Endothelial cell of umbilical vein (primary cell): ENCODE measurements at regions of chr3 and their contacts with region 1.

Region 1: GRCh38 chr3:158644345-158644908 is at the start of gene GFM1:
- DNase-seq: peak; percentile 97
- H3K4me3 ChIP-seq: peak within 1 kb of the TSS; percentile 41 to 95 (median 74)
- H3K27ac ChIP-seq: peak within 1 kb of the TSS; percentile 60
- H3K4me1 ChIP-seq: peaks cover 17% of the 10 kb centered on the region
- H3K27me3 ChIP-seq: no peaks in the 10 kb centered on the region
- CTCF ChIP-seq: peak; percentile 88 to 93
- POLR2A ChIP-seq: peak; percentile 72
- total RNA-seq, gene GFM1: 60.1 and 68.6 TPM in 2 replicates

Region 2: GRCh38 chr3:158109804-158110657 is 534.4 kb before region 1 on chr3 and contains the start of gene RSRC1:
- CTCF ChIA-PET with region 1: no interaction called
- POLR2A ChIA-PET with region 1: no interaction called
- dilution Hi-C with region 1: no loop called
- intact Hi-C with region 1: loop called (anchors 10 kb)
- DNase-seq: peak; percentile 89
- H3K4me3 ChIP-seq: peak within 1 kb of the TSS; percentile 75 to 95 (median 83)
- H3K27ac ChIP-seq: peak within 1 kb of the TSS; percentile 9
- H3K4me1 ChIP-seq: peaks cover 12% of the 10 kb centered on the region
- H3K27me3 ChIP-seq: peaks cover 23 to 46% of the 10 kb centered on the region in 2 experiments
- CTCF ChIP-seq: no peak
- POLR2A ChIP-seq: peak; percentile 74
- total RNA-seq, gene RSRC1: 24.8 and 25.4 TPM in 2 replicates

Region 3: DNA sequence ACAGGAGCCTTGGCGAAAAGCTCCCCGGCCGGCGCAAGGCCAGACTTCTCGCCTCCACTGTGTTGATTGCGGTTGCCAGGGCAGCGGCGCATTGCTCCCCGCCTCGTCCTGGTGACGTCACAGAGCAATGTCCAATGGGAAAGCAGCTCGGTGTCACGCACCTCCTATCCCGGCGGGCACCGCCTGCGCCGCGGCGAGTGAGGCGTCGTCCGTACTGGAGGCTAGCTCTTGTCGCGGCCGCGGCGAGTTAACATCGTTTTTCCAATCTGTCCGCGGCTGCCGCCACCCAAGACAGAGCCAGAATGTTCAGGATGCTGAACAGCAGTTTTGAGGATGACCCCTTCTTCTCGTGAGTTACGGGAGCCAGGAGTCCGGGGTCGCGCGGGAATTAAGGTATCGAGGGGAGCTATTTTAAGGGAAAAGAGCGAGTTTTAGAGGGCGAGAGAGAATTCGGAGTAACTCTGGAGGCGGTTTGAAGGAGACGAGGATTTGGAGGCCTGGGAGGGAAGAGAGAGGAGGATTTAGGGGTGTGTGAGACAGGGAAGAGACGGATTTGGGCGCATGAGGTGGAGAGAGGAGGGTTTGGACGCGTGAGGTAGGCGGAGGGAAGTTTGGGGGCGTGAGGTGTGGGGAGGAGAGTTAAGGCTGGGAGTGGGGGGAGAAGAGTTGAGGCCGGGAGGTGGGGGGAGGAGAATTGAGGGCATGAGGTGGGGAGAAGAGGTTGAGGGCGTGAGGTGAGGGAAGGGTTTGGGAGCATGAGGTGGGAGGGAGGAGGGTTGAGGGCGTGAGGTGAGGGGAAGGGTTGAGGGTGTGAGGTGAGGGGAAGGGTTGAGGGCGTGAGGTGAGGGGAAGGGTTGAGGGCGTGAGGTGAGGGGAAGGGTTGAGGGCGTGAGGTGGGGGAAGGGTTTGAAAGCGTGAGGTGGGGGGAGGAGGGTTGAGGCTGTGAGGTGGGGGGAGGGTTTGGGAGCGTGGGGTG is 73.1 kb before region 1 on chr3 and contains the start of gene MLF1:
- CTCF ChIA-PET with region 1: interaction called, 11 read pairs
- POLR2A ChIA-PET with region 1: interaction called, 6 read pairs
- dilution Hi-C with region 1: no loop called
- intact Hi-C with region 1: loop called (anchors 2 kb)
- DNase-seq: peak; percentile 98
- H3K4me3 ChIP-seq: peak within 1 kb of the TSS; percentile 2 to 54 (median 31)
- H3K27ac ChIP-seq: peak within 1 kb of the TSS; percentile 3
- H3K4me1 ChIP-seq: no peaks in the 10 kb centered on the region
- H3K27me3 ChIP-seq: no peaks in the 10 kb centered on the region
- CTCF ChIP-seq: no peak
- POLR2A ChIP-seq: no peak
- total RNA-seq, gene MLF1: 5.3 and 8.8 TPM in 2 replicates

Region 4: GRCh38 chr3:158631991-158632390 is 12.4 kb before region 1 on chr3:
- CTCF ChIA-PET with region 1: no interaction called
- POLR2A ChIA-PET with region 1: no interaction called
- dilution Hi-C with region 1: no loop called
- intact Hi-C with region 1: no loop called
- DNase-seq: no peak
- H3K4me3 ChIP-seq: no peak overlapping the region
- H3K27ac ChIP-seq: no peak overlapping the region
- H3K4me1 ChIP-seq: no peaks in the 10 kb centered on the region
- H3K27me3 ChIP-seq: peaks cover 0 to 2% of the 10 kb centered on the region in 2 experiments
- CTCF ChIP-seq: no peak
- POLR2A ChIP-seq: no peak

Region 5: DNA sequence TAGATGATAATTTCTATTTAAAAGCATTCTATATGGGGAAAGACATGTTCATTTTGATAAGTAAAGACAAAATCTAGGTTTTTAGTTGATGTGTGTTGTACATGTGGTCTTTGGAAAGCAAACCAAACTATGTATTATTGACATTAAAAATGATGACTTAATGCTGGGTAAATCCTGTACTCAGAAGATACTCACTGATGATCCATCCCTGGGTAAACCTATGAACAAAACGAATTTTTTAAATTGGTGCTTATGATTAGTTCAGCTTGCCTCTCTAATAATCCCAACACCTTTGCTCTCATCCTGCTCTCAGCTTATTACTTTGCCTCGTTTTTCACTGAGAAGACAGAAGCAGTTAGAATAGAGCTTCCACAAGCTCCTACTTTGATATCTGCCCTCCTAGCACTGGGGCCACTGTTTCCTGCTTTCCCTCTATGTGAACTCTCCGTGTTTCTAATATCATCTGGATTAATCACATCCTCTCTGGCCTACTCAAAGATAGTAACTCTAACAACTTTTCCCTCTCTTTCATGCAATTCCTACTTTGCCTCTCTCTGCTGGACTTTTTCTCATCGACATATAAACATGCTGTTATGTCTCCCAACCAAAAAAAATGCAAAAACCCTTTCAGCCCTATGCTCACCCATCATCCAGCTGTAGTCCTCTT is 58.5 kb after region 1 on chr3:
- CTCF ChIA-PET with region 1: no interaction called
- POLR2A ChIA-PET with region 1: interaction called, 11 read pairs
- dilution Hi-C with region 1: no loop called
- intact Hi-C with region 1: no loop called
- DNase-seq: peak; percentile 89
- H3K4me3 ChIP-seq: peak overlapping the region in 1 of 3 experiments; percentile 23
- H3K27ac ChIP-seq: peak overlapping the region; percentile 80
- H3K4me1 ChIP-seq: peaks cover 52% of the 10 kb centered on the region
- H3K27me3 ChIP-seq: no peaks in the 10 kb centered on the region
- CTCF ChIP-seq: no peak
- POLR2A ChIP-seq: peak; percentile 50